Lower lobe of right lung (tissue), 2 donors: ENCODE measurements at regions of chr9 and their contacts with region 1.

Region 1: GRCh38 chr9:121992571-121993212 is 100.4 kb downstream of the TTLL11 start:
- DNase-seq: peak; percentile 62
- ATAC-seq: peak; percentile 76 to 86
- H3K4me3 ChIP-seq: no peak overlapping the region
- H3K27ac ChIP-seq: no peak overlapping the region
- H3K4me1 ChIP-seq: peaks cover 3% of the 10 kb centered on the region
- H3K27me3 ChIP-seq: no peaks in the 10 kb centered on the region
- CTCF ChIP-seq: peak; percentile 84

Region 2: DNA sequence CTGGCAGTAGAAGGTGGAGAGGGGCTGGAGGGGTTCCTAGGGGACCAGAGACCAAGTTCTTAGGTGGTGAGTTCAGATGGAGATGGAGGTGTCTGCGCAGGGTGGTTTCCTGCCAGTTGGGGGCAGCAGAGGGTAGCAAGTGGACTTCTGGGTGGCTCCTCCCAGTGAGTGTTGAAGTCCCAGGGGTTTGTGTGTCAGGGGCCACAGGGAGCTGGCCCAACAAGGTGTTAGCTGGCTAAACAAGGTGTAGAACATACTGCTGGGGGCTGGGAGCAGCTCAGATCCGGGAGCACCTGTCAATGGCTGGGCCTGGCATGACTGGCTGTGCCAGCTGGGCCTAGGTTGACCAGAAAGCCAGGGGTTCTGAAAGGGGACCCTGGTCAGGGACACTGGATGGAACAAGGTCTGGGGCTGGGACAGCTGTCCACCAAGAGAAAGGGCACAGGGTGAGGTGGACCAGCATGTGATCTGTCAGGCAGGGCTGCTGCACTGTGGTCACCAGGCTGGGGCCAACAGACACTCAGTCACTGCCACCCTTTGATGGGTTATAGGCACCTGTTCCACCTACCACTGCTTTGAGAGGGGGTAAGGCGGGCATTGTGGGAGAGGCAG is 305.7 kb before region 1 on chr9:
- intact Hi-C with region 1: loop called (anchors 10 kb)
- DNase-seq: peak; percentile 77
- ATAC-seq: peak; percentile 83 to 86
- H3K4me3 ChIP-seq: no peak overlapping the region
- H3K27ac ChIP-seq: no peak overlapping the region
- H3K4me1 ChIP-seq: peaks cover 16% of the 10 kb centered on the region
- H3K27me3 ChIP-seq: no peaks in the 10 kb centered on the region
- CTCF ChIP-seq: peak; percentile 89